PC-3 (cell line): ENCODE measurements at regions of chr11 and their contacts with region 1.

Region 1: DNA sequence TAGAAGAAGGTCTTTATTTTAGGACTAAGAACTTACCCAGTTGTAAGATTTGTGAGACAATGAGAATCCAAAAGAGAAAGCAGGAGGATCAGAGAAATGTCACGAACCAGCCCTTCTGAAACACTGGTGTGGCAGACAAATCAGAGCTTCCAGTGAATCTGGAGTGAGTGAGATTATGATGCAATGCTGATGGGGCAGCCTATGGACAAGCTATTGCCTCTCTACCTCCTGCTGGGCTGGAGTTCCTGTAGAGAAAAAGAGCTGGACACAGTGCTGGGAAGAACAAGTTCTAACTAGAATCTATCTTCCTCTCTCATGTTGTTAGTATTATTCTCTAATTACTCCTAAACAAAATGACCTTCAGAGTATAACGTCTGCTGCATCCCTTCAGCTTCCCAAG is 12.0 kb upstream of the ANO3 start:
- DNase-seq: no peak
- ATAC-seq: no peak
- H3K4me3 ChIP-seq: no peak overlapping the region
- H3K27ac ChIP-seq: no peak overlapping the region
- H3K4me1 ChIP-seq: no peaks in the 10 kb centered on the region
- H3K27me3 ChIP-seq: peaks cover 6% of the 10 kb centered on the region; the same call in 1 of the 2 replicates
- CTCF ChIP-seq: no peak

Region 2: GRCh38 chr11:26331911-26332571 is 12.1 kb after region 1 on chr11 and contains the start of gene ANO3:
- CTCF ChIA-PET with region 1: interaction called, 11 read pairs
- POLR2A ChIA-PET with region 1: no interaction called
- intact Hi-C with region 1: no loop called
- DNase-seq: peak; percentile 63
- ATAC-seq: peak; percentile 100
- H3K4me3 ChIP-seq: no peak within 1 kb of the TSS
- H3K27ac ChIP-seq: no peak within 1 kb of the TSS
- H3K4me1 ChIP-seq: no peaks in the 10 kb centered on the region
- H3K27me3 ChIP-seq: peaks cover 47% of the 10 kb centered on the region
- CTCF ChIP-seq: peak; percentile 47
- total RNA-seq, gene ANO3: not detected in 2 replicates